ENCODE measurements at regions of chr6 and their contacts with region 1.

Region 1: DNA sequence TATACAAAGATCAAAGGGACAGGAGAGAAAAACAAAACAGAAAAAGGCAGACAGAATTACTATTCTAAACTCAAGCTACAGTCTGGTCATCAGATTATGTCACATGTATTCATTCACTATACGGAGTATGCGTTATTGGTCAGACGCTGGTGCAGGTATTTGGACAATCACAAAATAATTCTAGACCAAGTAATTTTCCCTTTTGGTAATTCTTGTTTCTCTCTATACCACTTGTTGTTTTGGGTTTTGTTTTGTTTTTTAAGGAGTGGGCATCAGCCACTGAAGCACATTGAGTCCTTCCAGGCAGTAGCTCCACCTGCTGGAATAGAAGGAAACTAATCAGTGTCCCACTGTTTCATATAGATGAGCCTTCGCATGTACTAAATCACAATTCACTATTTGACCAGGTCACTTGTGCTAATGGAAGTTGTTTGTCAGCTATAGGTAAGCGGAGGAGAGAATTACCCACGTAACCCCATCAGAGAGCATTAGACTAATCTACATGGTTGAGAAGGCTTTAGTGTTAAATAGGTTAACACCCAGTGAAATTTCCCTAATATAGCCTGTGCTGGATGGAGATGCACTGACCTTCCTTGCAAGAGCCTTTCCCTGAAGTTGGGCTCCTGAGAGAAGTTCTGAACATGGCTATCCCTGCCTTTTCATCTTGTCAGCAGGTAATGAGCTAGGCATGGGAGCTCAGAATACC is 77.9 kb downstream of the TNFAIP3 start:
- DNase-seq: peak in 2 of 5 donors; percentile 3 to 39
- H3K4me3 ChIP-seq: no peak overlapping the region
- H3K4me3 Mint-ChIP-seq: peak overlapping the region in 1 of 7 donors; percentile 22
- H3K27ac ChIP-seq: no peak overlapping the region
- H3K27ac Mint-ChIP-seq: peak overlapping the region in 6 of 8 donors; percentile 7 to 79 (median 64)
- H3K4me1 ChIP-seq: peaks cover 10% of the 10 kb centered on the region
- H3K4me1 Mint-ChIP-seq: peaks cover 21 to 27% (median 27%) of the 10 kb centered on the region in 3 donors
- H3K27me3 ChIP-seq: no peaks in the 10 kb centered on the region
- H3K27me3 Mint-ChIP-seq: no peaks in the 10 kb centered on the region

Region 2: GRCh38 chr6:137707590-137708360 is 237.2 kb before region 1 on chr6:
- CTCF ChIA-PET with region 1: interaction called, 20 read pairs
- POLR2A ChIA-PET with region 1: no interaction called
- DNase-seq: peak; percentile 74 to 96 (median 92)
- H3K4me3 ChIP-seq: peak overlapping the region; percentile 20
- H3K4me3 Mint-ChIP-seq: peak overlapping the region; percentile 38 to 78 (median 75)
- H3K27ac ChIP-seq: peak overlapping the region; percentile 72
- H3K27ac Mint-ChIP-seq: peak overlapping the region; percentile 90 to 99 (median 97)
- H3K4me1 ChIP-seq: peaks cover 47% of the 10 kb centered on the region
- H3K4me1 Mint-ChIP-seq: peaks cover 50 to 75% (median 72%) of the 10 kb centered on the region in 3 donors
- H3K27me3 ChIP-seq: no peaks in the 10 kb centered on the region
- H3K27me3 Mint-ChIP-seq: peaks cover 0 to 7% of the 10 kb centered on the region in 2 donors

Region 3: GRCh38 chr6:137717074-137718073 is 227.6 kb before region 1 on chr6:
- CTCF ChIA-PET with region 1: interaction called, 10 read pairs
- POLR2A ChIA-PET with region 1: no interaction called
- DNase-seq: peak; percentile 62 to 94 (median 82)
- H3K4me3 ChIP-seq: no peak overlapping the region
- H3K4me3 Mint-ChIP-seq: peak overlapping the region; percentile 30 to 73 (median 61)
- H3K27ac ChIP-seq: peak overlapping the region; percentile 60
- H3K27ac Mint-ChIP-seq: peak overlapping the region; percentile 92 to 100 (median 98)
- H3K4me1 ChIP-seq: peaks cover 36% of the 10 kb centered on the region
- H3K4me1 Mint-ChIP-seq: peaks cover 47 to 59% (median 55%) of the 10 kb centered on the region in 3 donors
- H3K27me3 ChIP-seq: no peaks in the 10 kb centered on the region
- H3K27me3 Mint-ChIP-seq: peaks cover 0 to 1% of the 10 kb centered on the region in 2 donors

Region 4: GRCh38 chr6:137791281-137792159 is 153.4 kb before region 1 on chr6:
- CTCF ChIA-PET with region 1: no interaction called
- POLR2A ChIA-PET with region 1: no interaction called
- DNase-seq: no peak
- H3K4me3 ChIP-seq: no peak overlapping the region
- H3K4me3 Mint-ChIP-seq: peak overlapping the region; percentile 59 to 87 (median 65)
- H3K27ac ChIP-seq: no peak overlapping the region
- H3K27ac Mint-ChIP-seq: peak overlapping the region; percentile 14 to 73 (median 50)
- H3K4me1 ChIP-seq: peaks cover 37% of the 10 kb centered on the region
- H3K4me1 Mint-ChIP-seq: peaks cover 40 to 61% (median 55%) of the 10 kb centered on the region in 3 donors
- H3K27me3 ChIP-seq: no peaks in the 10 kb centered on the region
- H3K27me3 Mint-ChIP-seq: no peaks in the 10 kb centered on the region

Region 5: DNA sequence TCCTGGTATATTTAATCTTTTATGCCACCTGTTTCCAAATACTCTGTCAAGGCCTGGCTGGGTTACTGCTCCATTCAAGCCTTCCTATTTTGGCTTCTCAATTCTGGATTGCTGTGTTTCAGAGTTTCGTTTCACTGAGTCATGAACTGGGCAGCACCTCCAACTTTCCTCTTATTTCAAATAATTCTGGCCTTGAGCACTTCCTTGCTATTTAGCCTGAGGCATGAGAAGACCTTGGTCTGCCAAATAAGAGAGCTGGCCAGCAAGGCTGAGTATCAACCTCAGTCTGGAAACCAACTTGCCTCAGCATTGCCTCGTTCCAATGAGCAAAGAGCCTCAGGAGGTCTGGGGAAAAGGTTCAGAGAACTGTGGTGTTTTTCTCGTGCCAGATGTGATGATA is 11.2 kb before region 1 on chr6:
- CTCF ChIA-PET with region 1: interaction called, 10 read pairs
- POLR2A ChIA-PET with region 1: no interaction called
- DNase-seq: no peak
- H3K4me3 ChIP-seq: no peak overlapping the region
- H3K4me3 Mint-ChIP-seq: no peak overlapping the region
- H3K27ac ChIP-seq: no peak overlapping the region
- H3K27ac Mint-ChIP-seq: no peak overlapping the region
- H3K4me1 ChIP-seq: peaks cover 3% of the 10 kb centered on the region
- H3K4me1 Mint-ChIP-seq: peaks cover 1 to 5% (median 3%) of the 10 kb centered on the region in 3 donors
- H3K27me3 ChIP-seq: no peaks in the 10 kb centered on the region
- H3K27me3 Mint-ChIP-seq: peaks cover 0 to 2% of the 10 kb centered on the region in 2 donors

Region 6: GRCh38 chr6:137989664-137990063 is 44.7 kb after region 1 on chr6:
- CTCF ChIA-PET with region 1: no interaction called
- POLR2A ChIA-PET with region 1: no interaction called
- DNase-seq: no peak
- H3K4me3 ChIP-seq: no peak overlapping the region
- H3K4me3 Mint-ChIP-seq: no peak overlapping the region
- H3K27ac ChIP-seq: no peak overlapping the region
- H3K27ac Mint-ChIP-seq: no peak overlapping the region
- H3K4me1 ChIP-seq: no peaks in the 10 kb centered on the region
- H3K4me1 Mint-ChIP-seq: no peaks in the 10 kb centered on the region
- H3K27me3 ChIP-seq: peaks cover 5% of the 10 kb centered on the region
- H3K27me3 Mint-ChIP-seq: peaks cover 5 to 24% of the 10 kb centered on the region in 2 donors

Measured in CD8-positive, alpha-beta memory T cell (primary cell).